MCF 10A (cell line): ENCODE measurements at regions of chr21 and their contacts with region 1.

Region 1: GRCh38 chr21:38805328-38806152 is at the start of gene ETS2:
- DNase-seq: peak; percentile 97
- H3K4me3 Mint-ChIP-seq: peak within 1 kb of the TSS; percentile 97
- H3K27ac Mint-ChIP-seq: peak within 1 kb of the TSS; percentile 98
- H3K4me1 Mint-ChIP-seq: peaks cover 30% of the 10 kb centered on the region
- H3K27me3 Mint-ChIP-seq: no peaks in the 10 kb centered on the region
- CTCF ChIP-seq: no peak
- total RNA-seq, gene ETS2: 109 and 126 TPM in 2 replicates

Region 2: GRCh38 chr21:38669176-38669575 is 136.4 kb before region 1 on chr21:
- CTCF ChIA-PET with region 1: interaction called, 4 read pairs
- POLR2A ChIA-PET with region 1: no interaction called
- intact Hi-C with region 1: loop called (anchors 10 kb)
- DNase-seq: peak; percentile 48
- H3K4me3 Mint-ChIP-seq: no peak overlapping the region
- H3K27ac Mint-ChIP-seq: no peak overlapping the region
- H3K4me1 Mint-ChIP-seq: no peaks in the 10 kb centered on the region
- H3K27me3 Mint-ChIP-seq: peaks cover 35% of the 10 kb centered on the region
- CTCF ChIP-seq: peak; percentile 48

Region 3: GRCh38 chr21:38766987-38767722 is 38.4 kb before region 1 on chr21:
- CTCF ChIA-PET with region 1: interaction called, 5 read pairs
- POLR2A ChIA-PET with region 1: interaction called, 110 read pairs
- intact Hi-C with region 1: loop called (anchors 2 kb)
- DNase-seq: peak; percentile 34
- H3K4me3 Mint-ChIP-seq: peak overlapping the region; percentile 43
- H3K27ac Mint-ChIP-seq: peak overlapping the region; percentile 97
- H3K4me1 Mint-ChIP-seq: peaks cover 16% of the 10 kb centered on the region
- H3K27me3 Mint-ChIP-seq: no peaks in the 10 kb centered on the region
- CTCF ChIP-seq: no peak

Region 4: GRCh38 chr21:38819714-38820183 is 14.2 kb after region 1 on chr21:
- CTCF ChIA-PET with region 1: interaction called, 7 read pairs
- POLR2A ChIA-PET with region 1: interaction called, 113 read pairs
- intact Hi-C with region 1: no loop called
- DNase-seq: peak; percentile 71
- H3K4me3 Mint-ChIP-seq: peak overlapping the region; percentile 40
- H3K27ac Mint-ChIP-seq: peak overlapping the region; percentile 75
- H3K4me1 Mint-ChIP-seq: peaks cover 35% of the 10 kb centered on the region
- H3K27me3 Mint-ChIP-seq: no peaks in the 10 kb centered on the region
- CTCF ChIP-seq: no peak

Region 5: GRCh38 chr21:38913120-38913892 is 107.8 kb after region 1 on chr21:
- CTCF ChIA-PET with region 1: no interaction called
- POLR2A ChIA-PET with region 1: interaction called, 188 read pairs
- intact Hi-C with region 1: loop called (anchors 5 kb)
- DNase-seq: peak; percentile 92
- H3K4me3 Mint-ChIP-seq: no peak overlapping the region
- H3K27ac Mint-ChIP-seq: no peak overlapping the region
- H3K4me1 Mint-ChIP-seq: peaks cover 9% of the 10 kb centered on the region
- H3K27me3 Mint-ChIP-seq: no peaks in the 10 kb centered on the region
- CTCF ChIP-seq: no peak

Region 6: DNA sequence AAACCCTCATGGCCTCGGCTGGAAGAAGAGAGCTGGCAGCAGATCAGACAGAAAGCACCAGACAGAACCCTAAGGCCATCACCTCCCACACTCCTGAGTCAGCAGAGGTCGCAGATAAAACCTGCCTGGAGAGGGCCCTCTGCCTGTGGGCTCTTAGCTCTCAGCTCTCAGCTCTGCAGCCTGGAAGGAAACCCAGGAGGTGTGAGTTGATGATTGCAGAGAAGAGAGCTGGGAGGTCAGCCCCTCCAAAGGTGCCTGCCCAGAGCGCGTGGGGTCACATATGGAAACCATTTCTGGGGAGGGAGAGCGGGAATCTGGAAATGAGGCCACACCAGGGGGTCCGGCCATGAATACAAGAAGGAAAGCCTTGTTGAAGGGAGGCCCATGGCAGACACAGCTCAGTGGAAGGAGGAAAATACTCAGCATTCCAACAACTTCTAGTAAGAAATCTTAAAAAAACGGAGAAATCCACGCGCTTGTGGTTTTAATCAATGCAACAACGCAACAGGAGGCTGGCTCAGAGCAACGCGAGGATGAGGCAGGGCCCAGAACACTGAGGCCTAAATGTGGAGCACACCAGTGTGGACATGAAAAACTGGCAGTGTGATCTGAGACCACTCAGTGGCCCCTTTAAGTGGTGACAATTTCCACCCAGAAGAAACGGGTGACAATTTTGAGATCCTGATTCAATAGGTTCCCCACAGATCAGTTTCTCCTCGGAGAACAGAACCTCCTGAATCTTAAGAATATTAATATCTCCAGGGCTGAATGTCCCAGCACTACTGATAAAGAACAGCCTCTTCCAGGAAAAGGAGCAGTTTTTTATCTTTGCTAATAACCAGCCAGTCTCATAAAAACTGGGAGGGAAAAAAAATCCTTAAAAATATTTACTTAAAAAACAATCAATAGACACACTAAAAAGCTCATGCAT is 332.0 kb after region 1 on chr21:
- CTCF ChIA-PET with region 1: interaction called, 18 read pairs
- POLR2A ChIA-PET with region 1: interaction called, 10 read pairs
- intact Hi-C with region 1: no loop called
- DNase-seq: peak; percentile 84
- H3K4me3 Mint-ChIP-seq: no peak overlapping the region
- H3K27ac Mint-ChIP-seq: no peak overlapping the region
- H3K4me1 Mint-ChIP-seq: peaks cover 14% of the 10 kb centered on the region
- H3K27me3 Mint-ChIP-seq: no peaks in the 10 kb centered on the region
- CTCF ChIP-seq: no peak